ENCODE measurements at regions of chr10 and their contacts with region 1.

Region 1: GRCh38 chr10:63629363-63630084 is 108.3 kb downstream of the REEP3 start:
- DNase-seq: peak; percentile 83 to 99
- H3K4me3 ChIP-seq: peak overlapping the region; percentile 67 to 70
- H3K27ac ChIP-seq: peak overlapping the region; percentile 90 to 99
- H3K4me1 ChIP-seq: peaks cover 0 to 20% of the 10 kb centered on the region in 2 donors
- H3K27me3 ChIP-seq: no peaks in the 10 kb centered on the region
- CTCF ChIP-seq: peak; percentile 67 to 74 (median 73)

Region 2: GRCh38 chr10:63217120-63217605 is 412.4 kb before region 1 on chr10:
- intact Hi-C with region 1: loop called (anchors 5 kb)
- DNase-seq: no peak
- H3K4me3 ChIP-seq: no peak overlapping the region
- H3K27ac ChIP-seq: no peak overlapping the region
- H3K4me1 ChIP-seq: no peaks in the 10 kb centered on the region
- H3K27me3 ChIP-seq: no peaks in the 10 kb centered on the region
- CTCF ChIP-seq: peak; percentile 49 to 70 (median 56)

Region 3: DNA sequence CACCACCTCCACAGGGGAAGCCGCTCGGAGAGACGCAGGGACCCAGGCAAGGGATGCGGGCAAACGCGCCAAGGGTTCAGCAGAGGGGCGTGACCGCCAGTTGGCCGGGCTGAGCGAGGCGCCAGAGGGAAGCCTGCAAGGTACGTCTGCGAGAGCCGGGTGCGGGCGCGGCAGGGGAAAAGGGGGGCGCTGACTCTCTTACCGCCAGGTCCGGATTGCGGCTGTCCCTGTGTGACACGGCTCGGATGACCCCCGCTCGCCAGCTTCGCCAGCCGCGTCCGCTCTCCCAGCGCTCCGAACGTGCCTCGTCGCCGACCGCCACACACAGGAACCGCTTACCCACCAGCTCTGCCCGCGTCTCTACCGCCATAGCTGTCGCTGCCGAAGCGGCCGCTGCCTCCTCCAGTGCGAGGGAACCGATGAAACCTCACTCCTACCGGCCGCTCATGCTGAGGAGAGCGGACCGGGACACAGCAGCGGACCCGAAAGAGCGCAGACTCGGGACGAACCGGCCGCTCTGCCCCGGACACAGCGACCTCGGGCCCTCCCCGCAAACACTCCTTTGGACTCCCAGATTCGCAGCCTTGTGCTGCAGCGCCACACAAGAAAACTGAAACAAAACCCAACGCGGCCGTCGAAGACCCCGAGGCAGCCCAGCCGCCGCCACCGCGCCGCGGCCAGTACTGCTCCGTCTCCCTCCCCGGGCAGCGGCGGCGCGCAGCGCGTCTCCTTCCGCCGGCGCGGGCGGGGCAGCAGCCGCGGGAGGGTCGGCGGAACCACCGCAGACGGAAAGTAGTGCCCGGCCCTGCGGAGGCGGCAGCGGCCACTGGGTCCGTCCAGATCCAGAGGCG is 164.0 kb before region 1 on chr10 and contains the start of gene JMJD1C:
- intact Hi-C with region 1: loop called (anchors 2 kb)
- DNase-seq: peak; percentile 21 to 88
- H3K4me3 ChIP-seq: peak within 1 kb of the TSS; percentile 88 to 100
- H3K27ac ChIP-seq: peak within 1 kb of the TSS; percentile 88 to 99
- H3K4me1 ChIP-seq: peaks cover 0 to 19% of the 10 kb centered on the region in 2 donors
- H3K27me3 ChIP-seq: no peaks in the 10 kb centered on the region
- CTCF ChIP-seq: no peak
- total RNA-seq, gene JMJD1C: 65.0 TPM

Region 4: GRCh38 chr10:63588436-63589167 is 40.9 kb before region 1 on chr10:
- intact Hi-C with region 1: loop called (anchors 5 kb)
- DNase-seq: no peak
- H3K4me3 ChIP-seq: no peak overlapping the region
- H3K27ac ChIP-seq: no peak overlapping the region
- H3K4me1 ChIP-seq: peaks cover 0 to 44% of the 10 kb centered on the region in 2 donors
- H3K27me3 ChIP-seq: no peaks in the 10 kb centered on the region
- CTCF ChIP-seq: no peak

Region 5: DNA sequence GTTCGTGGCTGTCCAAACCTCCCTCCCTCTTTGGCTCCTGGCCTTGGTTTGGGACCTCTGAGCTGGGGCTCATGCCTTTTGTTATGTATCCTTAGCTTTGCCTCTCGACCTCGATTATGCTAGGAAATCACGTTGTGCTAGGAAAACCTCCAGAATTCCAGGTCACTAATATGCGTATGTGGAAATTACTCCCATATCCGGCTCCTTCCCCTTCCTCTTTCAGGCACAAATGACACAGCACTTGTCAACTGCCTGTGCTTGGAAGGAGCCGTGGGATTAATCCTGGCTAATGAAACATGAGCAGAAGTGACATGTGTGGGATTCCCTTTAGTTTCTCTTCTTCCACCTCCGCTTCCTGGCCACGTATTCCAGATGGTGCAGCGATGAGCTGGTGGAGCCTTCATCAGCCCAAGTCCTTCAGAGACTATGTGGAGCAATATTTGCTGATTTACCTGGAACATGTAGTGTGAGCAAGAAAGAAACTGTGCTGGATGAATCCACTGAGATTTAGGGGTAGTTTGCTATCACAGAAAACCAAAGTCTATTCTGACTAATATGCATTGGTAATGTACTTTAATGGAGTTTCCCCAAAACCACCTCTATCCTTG is 40.9 kb after region 1 on chr10:
- intact Hi-C with region 1: no loop called
- DNase-seq: no peak
- H3K4me3 ChIP-seq: no peak overlapping the region
- H3K27ac ChIP-seq: no peak overlapping the region
- H3K4me1 ChIP-seq: no peaks in the 10 kb centered on the region
- H3K27me3 ChIP-seq: no peaks in the 10 kb centered on the region
- CTCF ChIP-seq: no peak

Region 6: GRCh38 chr10:63720072-63720537 is 90.6 kb after region 1 on chr10:
- intact Hi-C with region 1: loop called (anchors 1 kb)
- DNase-seq: no peak
- H3K4me3 ChIP-seq: peak overlapping the region in 1 of 2 donors; percentile 16
- H3K27ac ChIP-seq: peak overlapping the region; percentile 86 to 91
- H3K4me1 ChIP-seq: peaks cover 0 to 14% of the 10 kb centered on the region in 2 donors
- H3K27me3 ChIP-seq: no peaks in the 10 kb centered on the region
- CTCF ChIP-seq: peak; percentile 87 to 99 (median 97)

Region 7: GRCh38 chr10:63819753-63820329 is 190.3 kb after region 1 on chr10:
- intact Hi-C with region 1: loop called (anchors 5 kb)
- DNase-seq: peak in 1 of 2 donors; percentile 81
- H3K4me3 ChIP-seq: no peak overlapping the region
- H3K27ac ChIP-seq: no peak overlapping the region
- H3K4me1 ChIP-seq: no peaks in the 10 kb centered on the region
- H3K27me3 ChIP-seq: no peaks in the 10 kb centered on the region
- CTCF ChIP-seq: peak; percentile 46 to 79 (median 74)